ENCODE measurements at regions of chr3 and their contacts with region 1.

Region 1: DNA sequence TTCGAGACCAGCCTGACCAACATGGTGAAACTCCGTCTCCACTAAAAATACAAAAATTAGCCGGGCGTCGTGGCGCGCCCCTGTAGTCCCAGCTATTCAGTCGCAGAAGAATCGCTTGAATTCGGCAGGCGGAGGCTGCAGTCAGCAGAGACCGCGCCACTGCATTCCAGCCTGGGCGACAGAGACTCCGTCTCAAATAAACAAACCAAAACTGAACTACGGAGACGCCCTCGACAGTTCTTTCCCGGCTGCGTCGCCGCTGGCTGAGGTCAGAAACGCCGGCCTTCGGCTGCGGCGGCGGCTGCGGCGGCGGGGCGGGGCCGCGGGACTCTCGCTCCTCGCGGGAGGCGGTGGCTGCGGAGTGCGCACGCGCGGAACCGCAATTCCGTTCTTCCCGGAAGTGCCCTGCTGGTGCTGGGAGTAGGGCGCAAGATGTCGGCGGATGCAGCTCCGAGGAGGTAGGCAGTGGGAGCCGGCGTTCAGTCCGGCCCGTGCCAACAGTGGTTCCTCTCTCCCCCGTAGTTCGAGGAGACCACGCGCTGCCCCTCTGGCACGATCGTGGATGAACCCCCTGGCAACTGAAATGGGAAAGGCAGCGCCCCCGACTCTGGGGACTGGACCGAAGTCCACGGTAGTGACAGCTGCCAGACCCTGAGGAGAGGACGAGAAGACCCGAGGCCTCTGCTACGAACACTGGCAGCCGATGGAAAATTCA is 49.5 kb downstream of the TMEM44 start:
- DNase-seq: peak; percentile 95
- H3K4me3 ChIP-seq: peak overlapping the region; percentile 58
- H3K27ac ChIP-seq: peak overlapping the region; percentile 95
- H3K4me1 ChIP-seq: no peaks in the 10 kb centered on the region
- H3K27me3 ChIP-seq: no peaks in the 10 kb centered on the region
- CTCF ChIP-seq: no peak

Region 2: DNA sequence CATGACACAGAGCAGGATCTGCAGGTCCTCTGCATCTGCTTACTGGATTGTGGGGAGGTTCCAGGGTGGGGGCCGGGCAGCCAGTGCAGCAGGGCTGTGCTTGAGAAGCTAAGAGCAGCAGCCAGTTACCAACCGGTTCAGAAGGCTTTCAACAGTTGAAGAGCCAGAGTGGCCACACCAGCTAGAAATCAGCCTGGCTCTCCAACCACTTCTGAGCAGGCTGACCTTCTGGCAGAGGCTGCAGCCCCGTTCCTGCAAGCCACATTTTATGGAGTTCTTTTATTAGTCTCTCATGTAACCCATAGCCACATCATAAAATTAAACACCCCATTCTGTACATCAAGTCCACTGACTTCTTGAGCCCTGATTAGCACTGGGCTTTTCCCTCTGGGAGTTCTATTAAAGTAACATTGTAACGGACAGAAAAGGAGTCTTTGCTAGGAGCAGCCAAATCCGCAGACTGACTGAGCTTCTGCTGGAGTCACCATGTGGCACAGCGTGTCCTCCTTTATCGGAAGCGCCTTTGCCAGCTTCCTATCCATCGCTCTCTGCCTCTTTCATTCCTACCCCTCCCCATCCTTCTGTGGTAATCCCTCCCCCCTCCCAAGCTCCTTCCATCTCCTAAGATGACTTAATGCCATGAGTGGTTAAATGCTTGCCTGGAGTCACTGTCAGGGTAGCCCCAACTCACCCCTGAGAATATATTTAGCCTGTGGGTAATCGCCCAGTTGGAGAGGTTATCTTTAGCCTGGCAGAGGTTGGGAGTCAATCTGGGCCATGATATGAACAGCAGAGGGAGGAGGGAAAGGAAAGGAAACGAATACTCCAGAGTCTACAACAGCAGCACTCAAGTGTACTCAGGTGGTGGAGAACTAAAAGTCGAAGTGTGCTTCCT is 586.3 kb before region 1 on chr3:
- intact Hi-C with region 1: no loop called
- DNase-seq: peak; percentile 33
- H3K4me3 ChIP-seq: no peak overlapping the region
- H3K27ac ChIP-seq: no peak overlapping the region
- H3K4me1 ChIP-seq: no peaks in the 10 kb centered on the region
- H3K27me3 ChIP-seq: no peaks in the 10 kb centered on the region
- CTCF ChIP-seq: no peak

Region 3: DNA sequence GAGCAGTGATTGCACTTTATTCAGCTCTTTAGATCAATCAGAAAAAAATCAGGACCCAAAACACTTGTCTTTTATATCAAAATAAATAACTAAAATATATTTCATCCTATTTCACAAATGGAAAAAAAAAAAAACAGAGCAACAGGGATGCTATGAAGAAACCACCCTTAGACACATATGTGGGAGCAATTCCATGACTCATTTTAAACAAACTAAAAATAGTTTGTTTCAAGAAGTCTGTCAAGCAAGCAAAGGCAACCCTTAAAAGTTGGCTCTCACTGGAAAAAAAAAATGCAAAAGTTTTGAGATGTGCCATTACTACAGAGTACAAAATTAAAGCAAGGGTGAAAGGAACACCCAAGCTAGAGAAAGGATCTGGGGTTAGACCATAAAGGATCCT is 102.7 kb before region 1 on chr3:
- intact Hi-C with region 1: loop called (anchors 5 kb)
- DNase-seq: no peak
- H3K4me3 ChIP-seq: no peak overlapping the region
- H3K27ac ChIP-seq: no peak overlapping the region
- H3K4me1 ChIP-seq: peaks cover 5% of the 10 kb centered on the region
- H3K27me3 ChIP-seq: no peaks in the 10 kb centered on the region
- CTCF ChIP-seq: no peak

Region 4: GRCh38 chr3:194852825-194853537 is 269.2 kb after region 1 on chr3:
- intact Hi-C with region 1: no loop called
- DNase-seq: no peak
- H3K4me3 ChIP-seq: no peak overlapping the region
- H3K27ac ChIP-seq: no peak overlapping the region
- H3K4me1 ChIP-seq: peaks cover 6% of the 10 kb centered on the region
- H3K27me3 ChIP-seq: no peaks in the 10 kb centered on the region
- CTCF ChIP-seq: no peak

Region 5: GRCh38 chr3:194879991-194880939 is 296.5 kb after region 1 on chr3:
- intact Hi-C with region 1: no loop called
- DNase-seq: no peak
- H3K4me3 ChIP-seq: no peak overlapping the region
- H3K27ac ChIP-seq: no peak overlapping the region
- H3K4me1 ChIP-seq: peaks cover 12% of the 10 kb centered on the region
- H3K27me3 ChIP-seq: no peaks in the 10 kb centered on the region
- CTCF ChIP-seq: no peak